AG04450 (cell line): ENCODE measurements at regions of chr11 and their contacts with region 1.

Region 1: GRCh38 chr11:36564376-36565030 is 3.3 kb upstream of the RAG1 start:
- DNase-seq: peak; percentile 11
- H3K4me3 ChIP-seq: peak overlapping the region; percentile 18; the same call in 1 of the 2 replicates
- H3K27ac ChIP-seq: no peak overlapping the region
- H3K27me3 ChIP-seq: peaks cover 16% of the 10 kb centered on the region
- CTCF ChIP-seq: peak; percentile 76

Region 2: DNA sequence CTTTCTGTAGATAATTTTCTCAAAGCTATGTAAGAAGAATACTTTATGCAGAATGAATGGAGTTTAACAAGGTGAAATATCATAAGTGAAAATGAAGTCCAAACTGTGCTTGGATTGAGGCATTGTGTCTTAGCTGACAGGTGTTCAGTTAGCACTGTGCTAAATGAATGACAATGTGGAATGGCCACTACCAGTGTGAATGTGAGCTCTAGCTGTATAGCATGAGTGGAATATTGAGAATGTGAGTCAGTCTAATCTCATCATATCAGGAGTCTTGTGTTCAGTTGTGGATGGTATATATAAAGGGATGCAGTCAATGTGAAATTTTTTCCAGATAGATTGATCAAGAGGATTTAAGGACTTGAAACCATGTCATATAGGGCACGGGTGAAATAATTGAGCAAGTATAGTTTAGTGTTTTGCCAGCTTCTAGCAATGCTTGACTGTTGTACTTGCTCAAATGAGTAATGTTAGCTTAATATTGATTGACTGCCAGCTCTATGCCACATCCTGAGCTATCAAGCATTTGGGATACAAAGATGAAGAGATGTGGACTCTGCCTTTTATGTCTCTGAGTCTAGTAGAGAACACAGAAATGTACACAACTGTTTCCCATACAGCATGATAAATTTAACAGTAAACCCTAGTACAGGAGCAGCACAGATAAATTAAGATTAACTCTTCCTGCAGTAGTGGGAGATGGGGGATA is 44.1 kb after region 1 on chr11:
- CTCF ChIA-PET with region 1: interaction called, 10 read pairs
- POLR2A ChIA-PET with region 1: no interaction called
- DNase-seq: no peak
- H3K4me3 ChIP-seq: no peak overlapping the region
- H3K27ac ChIP-seq: no peak overlapping the region
- H3K27me3 ChIP-seq: no peaks in the 10 kb centered on the region
- CTCF ChIP-seq: no peak

Region 3: GRCh38 chr11:36657610-36658267 is 93.2 kb after region 1 on chr11:
- CTCF ChIA-PET with region 1: interaction called, 13 read pairs
- POLR2A ChIA-PET with region 1: no interaction called
- DNase-seq: no peak
- H3K4me3 ChIP-seq: no peak overlapping the region
- H3K27ac ChIP-seq: no peak overlapping the region
- H3K27me3 ChIP-seq: no peaks in the 10 kb centered on the region
- CTCF ChIP-seq: no peak

Region 4: GRCh38 chr11:36702330-36703055 is 138.0 kb after region 1 on chr11:
- CTCF ChIA-PET with region 1: interaction called, 11 read pairs
- POLR2A ChIA-PET with region 1: no interaction called
- DNase-seq: peak; percentile 30
- H3K4me3 ChIP-seq: no peak overlapping the region
- H3K27ac ChIP-seq: no peak overlapping the region
- H3K27me3 ChIP-seq: no peaks in the 10 kb centered on the region
- CTCF ChIP-seq: peak; percentile 76

Region 5: DNA sequence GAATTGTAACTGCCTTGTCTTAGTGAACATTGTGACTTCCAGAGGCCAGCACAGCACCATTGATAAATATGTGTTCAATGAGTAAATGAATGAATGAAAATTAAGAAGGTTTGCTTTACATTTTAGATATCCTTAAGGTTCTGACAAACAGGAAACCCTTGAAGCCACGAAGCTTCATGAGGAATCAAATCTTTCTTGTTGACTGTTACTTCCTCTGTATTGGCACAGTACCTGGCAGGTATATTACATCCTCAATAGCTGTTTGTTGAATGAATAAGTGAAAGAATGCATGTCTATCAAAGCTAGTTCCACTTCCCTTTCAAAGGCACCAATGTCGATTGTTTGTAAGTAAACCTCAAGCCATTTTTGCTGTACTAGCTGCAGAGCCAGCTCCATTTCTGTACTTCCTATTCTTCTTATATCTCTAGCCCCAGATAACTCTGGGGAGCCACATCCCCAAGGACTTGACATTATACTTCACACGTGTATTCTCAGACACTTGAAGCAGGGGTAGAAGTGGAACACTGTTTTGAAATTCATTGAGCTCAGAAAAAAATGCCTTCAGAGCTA is 173.9 kb after region 1 on chr11:
- CTCF ChIA-PET with region 1: interaction called, 29 read pairs
- POLR2A ChIA-PET with region 1: no interaction called
- DNase-seq: no peak
- H3K4me3 ChIP-seq: no peak overlapping the region
- H3K27ac ChIP-seq: no peak overlapping the region
- H3K27me3 ChIP-seq: no peaks in the 10 kb centered on the region
- CTCF ChIP-seq: no peak